T-cell (primary cell): ENCODE measurements at regions of chr12 and their contacts with region 1.

Region 1: DNA sequence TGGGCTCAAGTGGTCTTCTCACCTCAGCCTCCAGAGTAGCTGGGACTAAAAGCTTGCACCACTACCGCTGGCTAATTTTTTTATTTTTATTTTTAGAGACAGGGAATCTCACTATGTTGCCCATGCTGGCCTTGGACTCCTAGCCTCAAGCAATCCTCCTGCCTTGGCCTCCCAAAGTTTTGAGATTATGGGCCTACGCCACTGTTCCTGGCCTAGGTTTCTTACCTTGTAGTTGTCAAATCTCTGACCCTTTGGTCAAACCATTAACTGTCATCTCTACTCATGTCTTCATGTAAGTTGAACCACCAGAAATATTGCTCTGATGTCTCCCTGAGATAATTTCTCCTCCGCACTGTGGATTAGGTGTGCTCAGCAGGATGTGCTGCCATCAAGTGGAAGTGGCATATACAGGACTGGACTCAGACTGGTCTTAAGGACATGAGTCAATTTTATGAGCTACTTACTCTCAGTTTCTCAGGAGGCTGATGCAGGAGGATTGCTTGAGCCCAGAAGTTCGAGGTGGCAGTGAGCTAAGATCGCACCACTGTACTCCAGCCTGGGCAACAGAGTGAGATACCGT is 28.5 kb downstream of the ACTR6 start:
- DNase-seq: no peak
- ATAC-seq: peak in 1 of 4 experiments; percentile 38
- H3K4me3 ChIP-seq: no peak overlapping the region
- H3K4me3 Mint-ChIP-seq: no peak overlapping the region
- H3K27ac ChIP-seq: no peak overlapping the region
- H3K27ac Mint-ChIP-seq: no peak overlapping the region
- H3K4me1 ChIP-seq: no peaks in the 10 kb centered on the region
- H3K4me1 Mint-ChIP-seq: no peaks in the 10 kb centered on the region
- H3K27me3 ChIP-seq: no peaks in the 10 kb centered on the region
- H3K27me3 Mint-ChIP-seq: no peaks in the 10 kb centered on the region

Region 2: DNA sequence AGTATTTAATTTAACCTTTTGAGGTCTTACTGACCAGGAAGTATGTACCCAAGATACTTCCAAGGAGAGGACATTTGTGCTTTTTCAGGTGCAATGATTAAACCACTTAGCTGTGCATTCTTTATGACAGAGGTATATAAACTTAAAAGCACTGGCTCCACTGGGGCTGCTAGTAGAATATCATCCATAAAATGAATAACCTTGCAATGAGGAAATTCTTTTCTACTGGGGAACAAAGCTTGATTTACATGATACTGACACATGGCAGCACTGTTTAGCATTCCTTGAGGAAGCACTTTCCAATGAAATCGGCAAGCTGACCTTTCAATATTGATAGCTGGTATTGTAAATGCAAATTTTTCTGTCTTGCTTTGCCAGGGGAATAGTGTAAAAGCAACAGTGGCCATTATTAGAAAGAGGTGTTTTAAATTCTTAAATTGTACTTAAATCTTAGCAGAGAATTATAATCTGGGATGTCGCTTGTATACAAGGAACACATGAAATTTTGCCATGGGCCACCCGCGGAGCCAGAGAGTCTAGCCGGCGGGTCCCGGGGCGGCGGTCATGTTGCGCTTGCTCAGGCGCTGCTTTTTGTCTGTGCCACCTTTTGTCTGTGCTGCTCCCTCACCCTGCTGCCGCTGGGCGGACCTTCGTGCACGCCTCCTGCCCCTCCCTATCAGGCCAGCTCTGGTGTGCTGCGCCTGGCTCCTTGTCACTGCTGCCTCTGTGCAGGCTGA is 65.6 kb before region 1 on chr12:
- CTCF ChIA-PET with region 1: no interaction called
- POLR2A ChIA-PET with region 1: interaction called in 1 of 2 experiments, 16 read pairs
- DNase-seq: peak; percentile 36 to 78 (median 62)
- ATAC-seq: peak; percentile 99 to 100 (median 100)
- H3K4me3 ChIP-seq: peak overlapping the region in 1 of 2 donors; percentile 32
- H3K4me3 Mint-ChIP-seq: peak overlapping the region; percentile 57 to 62 (median 61)
- H3K27ac ChIP-seq: no peak overlapping the region
- H3K27ac Mint-ChIP-seq: no peak overlapping the region
- H3K4me1 ChIP-seq: peaks cover 0 to 5% of the 10 kb centered on the region in 2 experiments
- H3K4me1 Mint-ChIP-seq: peaks cover 10 to 12% (median 11%) of the 10 kb centered on the region in 3 donors
- H3K27me3 ChIP-seq: no peaks in the 10 kb centered on the region
- H3K27me3 Mint-ChIP-seq: no peaks in the 10 kb centered on the region

Region 3: DNA sequence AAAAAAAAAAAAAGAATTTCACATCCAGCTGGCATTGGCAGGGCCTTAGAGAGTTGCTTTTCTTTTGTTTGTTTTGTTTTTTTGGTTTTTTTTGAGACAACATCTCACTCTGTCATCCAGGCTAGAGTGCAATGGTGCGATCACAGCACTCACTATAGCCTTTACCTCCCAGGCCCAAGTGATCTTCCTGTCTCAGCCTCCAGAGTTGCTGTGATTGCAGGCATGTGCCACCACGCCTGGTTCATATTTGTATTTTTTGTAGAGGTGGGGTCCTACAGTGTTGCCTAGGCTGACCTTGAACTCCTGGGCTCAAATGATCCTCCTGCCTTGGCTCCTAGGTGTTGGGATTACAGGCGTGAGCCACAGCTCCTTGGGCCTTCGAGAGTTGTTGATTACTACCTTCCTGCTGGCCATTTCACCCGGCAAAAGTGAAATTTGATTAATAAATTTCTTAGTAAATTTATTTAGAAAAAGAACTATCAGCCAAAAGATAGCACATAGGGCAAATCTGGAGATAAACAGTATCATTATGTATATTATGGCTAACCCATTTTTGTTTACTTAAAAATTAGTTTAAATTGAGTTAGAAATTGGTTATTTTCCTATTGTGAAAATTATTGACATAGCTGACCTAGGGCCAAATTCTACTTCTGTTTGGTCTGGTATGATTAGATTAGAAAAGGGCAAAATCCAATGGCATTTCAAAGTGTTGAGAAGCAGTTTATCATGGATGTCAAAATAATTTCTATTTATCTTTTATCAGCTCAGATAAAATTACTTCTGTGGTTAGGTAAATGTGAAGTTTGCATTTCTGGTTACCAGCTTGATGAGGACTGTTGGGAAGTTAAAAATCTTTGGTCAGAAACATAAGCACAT is 15.9 kb before region 1 on chr12:
- CTCF ChIA-PET with region 1: no interaction called
- POLR2A ChIA-PET with region 1: no interaction called
- DNase-seq: no peak
- ATAC-seq: no peak
- H3K4me3 ChIP-seq: no peak overlapping the region
- H3K4me3 Mint-ChIP-seq: no peak overlapping the region
- H3K27ac ChIP-seq: no peak overlapping the region
- H3K27ac Mint-ChIP-seq: no peak overlapping the region
- H3K4me1 ChIP-seq: no peaks in the 10 kb centered on the region
- H3K4me1 Mint-ChIP-seq: peaks cover 0 to 2% (median 0%) of the 10 kb centered on the region in 3 donors
- H3K27me3 ChIP-seq: no peaks in the 10 kb centered on the region
- H3K27me3 Mint-ChIP-seq: no peaks in the 10 kb centered on the region